ENCODE measurements at regions of chr5 and their contacts with region 1.

Region 1: DNA sequence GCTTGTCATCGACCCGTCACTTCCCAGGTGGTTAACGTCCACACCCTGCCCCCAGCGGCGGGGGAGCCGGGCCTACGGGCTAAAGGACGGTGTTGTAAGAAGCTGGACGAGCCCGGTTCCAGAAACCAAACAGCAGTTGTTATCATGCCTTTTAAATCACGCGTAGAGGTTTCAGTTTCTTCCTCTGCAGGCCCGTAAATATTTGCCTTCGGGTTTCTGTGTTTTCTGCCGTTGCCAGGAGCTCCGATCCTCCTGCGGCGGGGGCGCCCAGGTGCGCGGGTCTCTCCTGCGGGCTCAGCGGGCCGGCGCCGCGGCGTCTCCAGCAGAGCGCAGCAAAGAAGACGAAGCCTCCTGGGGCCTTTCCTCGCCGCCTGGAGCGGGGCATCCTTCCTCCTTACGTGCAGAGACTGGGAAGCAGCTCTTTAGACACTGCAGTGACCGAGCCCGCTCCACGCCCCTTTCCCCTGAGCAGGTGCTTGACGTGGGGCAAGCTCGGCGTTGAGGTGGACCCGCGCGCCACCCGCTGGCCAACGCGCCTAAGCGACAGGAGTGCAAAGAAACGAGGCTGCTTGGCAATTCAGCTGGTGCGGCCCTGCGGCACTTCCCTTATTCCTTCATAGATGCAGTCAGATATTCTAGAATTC is 21.8 kb upstream of the TTC1 start:
- DNase-seq: peak; percentile 34
- ATAC-seq: peak; percentile 99
- H3K4me3 ChIP-seq: peak overlapping the region; percentile 45 to 69 (median 56); a peak in 5 of 6 replicates
- H3K27ac ChIP-seq: no peak overlapping the region
- H3K4me1 ChIP-seq: no peaks in the 10 kb centered on the region
- H3K27me3 ChIP-seq: peaks cover 0 to 48% of the 10 kb centered on the region in 2 experiments; a peak in 4 of 5 replicates
- CTCF ChIP-seq: peak; percentile 96
- EP300 ChIP-seq: no peak
- POLR2A ChIP-seq: no peak
- RAD21 ChIP-seq: peak; percentile 83

Region 2: DNA sequence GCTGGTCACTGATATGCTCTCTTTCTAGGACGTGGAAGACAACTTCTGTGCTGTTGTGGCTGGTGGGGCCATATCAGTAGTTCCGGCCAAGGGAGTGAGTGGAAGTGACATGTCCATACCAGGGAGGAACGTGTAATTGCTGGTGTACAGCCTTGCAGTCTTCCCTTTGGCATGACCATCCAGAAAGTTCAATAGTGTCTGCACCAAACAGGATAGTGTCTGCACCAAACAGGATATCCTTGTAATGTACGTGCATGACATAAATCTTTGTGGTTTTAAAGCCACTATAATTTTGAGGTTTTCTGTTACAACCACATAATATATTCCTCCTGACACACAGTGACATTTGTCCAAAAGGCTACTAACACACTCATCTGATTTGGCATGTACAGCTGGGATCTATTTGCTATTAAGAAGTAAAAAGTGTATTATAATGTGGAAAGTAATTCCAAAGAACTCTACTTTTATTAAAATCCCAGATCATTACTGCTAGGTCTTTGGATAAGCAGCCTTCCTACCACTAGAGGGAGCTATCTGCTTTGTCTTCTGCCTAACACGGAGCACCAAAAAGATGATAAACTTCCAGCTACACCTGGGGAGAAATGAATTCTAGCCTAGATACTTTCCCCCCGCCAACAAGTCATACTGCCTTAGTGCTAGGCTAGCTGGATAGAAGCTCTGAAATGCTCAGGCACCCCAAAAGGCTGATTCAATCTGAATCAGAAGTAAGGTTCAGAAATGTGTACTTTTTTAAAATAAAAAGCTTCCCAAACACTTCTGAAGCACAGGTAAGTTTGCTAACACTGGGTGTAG is 830.5 kb before region 1 on chr5:
- CTCF ChIA-PET with region 1: no interaction called
- POLR2A ChIA-PET with region 1: no interaction called
- in situ Hi-C with region 1: no loop called
- intact Hi-C with region 1: loop called (anchors 5 kb)
- DNase-seq: peak; percentile 64
- ATAC-seq: peak; percentile 91
- H3K4me3 ChIP-seq: no peak overlapping the region
- H3K27ac ChIP-seq: no peak overlapping the region
- H3K4me1 ChIP-seq: no peaks in the 10 kb centered on the region
- H3K27me3 ChIP-seq: no peaks in the 10 kb centered on the region; a peak in 1 of 5 replicates
- CTCF ChIP-seq: peak; percentile 81
- EP300 ChIP-seq: no peak
- POLR2A ChIP-seq: no peak
- RAD21 ChIP-seq: peak; percentile 70

Region 3: DNA sequence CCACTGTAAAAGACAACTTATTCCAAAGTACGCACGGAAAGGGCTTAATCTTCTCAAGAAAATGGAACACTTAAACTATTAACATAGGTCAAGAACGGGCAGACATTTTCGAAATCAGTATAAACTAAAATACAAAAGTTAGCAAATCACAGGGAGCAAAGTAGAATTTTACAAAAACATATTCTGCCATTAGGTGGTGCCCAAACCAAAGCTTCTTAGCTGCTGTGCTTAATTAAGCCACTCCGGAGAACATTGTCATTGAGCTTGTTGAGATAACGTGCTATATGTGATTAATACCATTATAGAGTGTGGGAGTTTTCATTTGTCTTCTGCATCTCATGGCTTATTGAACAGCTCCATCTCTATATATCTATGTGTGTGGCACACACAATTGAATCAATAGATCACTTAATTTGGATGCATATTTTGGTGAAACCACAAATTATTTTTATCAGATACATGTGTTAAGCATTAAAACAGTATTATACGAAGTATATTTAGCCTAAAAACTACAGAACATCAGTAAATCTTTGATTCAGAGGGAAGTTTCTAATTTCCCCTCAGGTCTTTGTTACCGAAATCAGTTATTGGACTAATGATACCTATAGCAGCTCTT is 700.6 kb before region 1 on chr5:
- CTCF ChIA-PET with region 1: no interaction called
- POLR2A ChIA-PET with region 1: no interaction called
- in situ Hi-C with region 1: no loop called
- intact Hi-C with region 1: loop called (anchors 5 kb)
- DNase-seq: peak; percentile 5
- ATAC-seq: peak; percentile 31; the same call in 2 of the 3 replicates
- H3K4me3 ChIP-seq: no peak overlapping the region
- H3K27ac ChIP-seq: no peak overlapping the region
- H3K4me1 ChIP-seq: no peaks in the 10 kb centered on the region
- H3K27me3 ChIP-seq: no peaks in the 10 kb centered on the region
- CTCF ChIP-seq: peak; percentile 46
- EP300 ChIP-seq: no peak
- POLR2A ChIP-seq: no peak
- RAD21 ChIP-seq: no peak

Region 4: DNA sequence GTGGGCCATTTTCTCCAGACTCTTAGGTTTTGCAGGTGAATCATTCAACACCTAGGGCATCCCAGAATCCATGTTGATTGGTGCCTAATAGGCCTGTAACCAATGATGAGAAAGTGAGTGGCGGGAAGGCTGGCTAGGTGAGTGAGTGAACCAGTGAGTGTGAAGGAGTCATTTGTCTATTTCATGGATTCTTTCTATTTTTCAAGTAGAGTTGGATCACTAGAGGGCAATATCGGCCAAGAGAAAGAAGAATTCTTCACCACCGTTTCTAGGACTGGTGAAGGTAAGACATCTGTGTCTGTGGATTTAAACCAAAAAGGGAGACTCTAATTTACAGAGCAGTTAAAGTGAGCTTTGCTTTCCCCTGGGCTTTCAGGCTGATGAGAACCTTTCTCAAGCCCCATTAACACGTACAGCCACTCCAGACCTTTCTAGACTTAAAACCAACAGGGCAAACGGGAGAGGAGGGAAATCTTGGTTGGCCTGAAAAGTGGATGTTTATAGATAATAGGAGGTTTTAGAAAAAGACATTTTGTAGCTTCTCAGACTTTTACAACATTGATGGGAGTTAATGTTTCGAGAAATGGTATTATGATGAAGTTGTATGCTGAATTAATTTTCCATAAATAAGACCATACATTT is 542.6 kb before region 1 on chr5:
- CTCF ChIA-PET with region 1: interaction called, 15 read pairs
- POLR2A ChIA-PET with region 1: no interaction called
- in situ Hi-C with region 1: loop called (anchors 5 kb)
- intact Hi-C with region 1: no loop called
- DNase-seq: peak; percentile 48
- ATAC-seq: peak; percentile 69
- H3K4me3 ChIP-seq: no peak overlapping the region
- H3K27ac ChIP-seq: no peak overlapping the region
- H3K4me1 ChIP-seq: no peaks in the 10 kb centered on the region
- H3K27me3 ChIP-seq: peaks cover 0 to 11% of the 10 kb centered on the region in 2 experiments; a peak in 1 of 5 replicates
- CTCF ChIP-seq: peak; percentile 71
- EP300 ChIP-seq: no peak
- POLR2A ChIP-seq: no peak
- RAD21 ChIP-seq: peak; percentile 40; the same call in 1 of the 2 replicates

Region 5: GRCh38 chr5:159515909-159516415 is 471.2 kb before region 1 on chr5:
- CTCF ChIA-PET with region 1: interaction called, 7 read pairs
- POLR2A ChIA-PET with region 1: no interaction called
- in situ Hi-C with region 1: no loop called
- intact Hi-C with region 1: loop called (anchors 1 kb)
- DNase-seq: peak; percentile 17
- ATAC-seq: peak; percentile 92
- H3K4me3 ChIP-seq: no peak overlapping the region
- H3K27ac ChIP-seq: no peak overlapping the region
- H3K4me1 ChIP-seq: no peaks in the 10 kb centered on the region
- H3K27me3 ChIP-seq: peaks cover 0 to 13% of the 10 kb centered on the region in 2 experiments; a peak in 3 of 5 replicates
- CTCF ChIP-seq: peak; percentile 78
- EP300 ChIP-seq: no peak
- POLR2A ChIP-seq: no peak
- RAD21 ChIP-seq: no peak

Region 6: DNA sequence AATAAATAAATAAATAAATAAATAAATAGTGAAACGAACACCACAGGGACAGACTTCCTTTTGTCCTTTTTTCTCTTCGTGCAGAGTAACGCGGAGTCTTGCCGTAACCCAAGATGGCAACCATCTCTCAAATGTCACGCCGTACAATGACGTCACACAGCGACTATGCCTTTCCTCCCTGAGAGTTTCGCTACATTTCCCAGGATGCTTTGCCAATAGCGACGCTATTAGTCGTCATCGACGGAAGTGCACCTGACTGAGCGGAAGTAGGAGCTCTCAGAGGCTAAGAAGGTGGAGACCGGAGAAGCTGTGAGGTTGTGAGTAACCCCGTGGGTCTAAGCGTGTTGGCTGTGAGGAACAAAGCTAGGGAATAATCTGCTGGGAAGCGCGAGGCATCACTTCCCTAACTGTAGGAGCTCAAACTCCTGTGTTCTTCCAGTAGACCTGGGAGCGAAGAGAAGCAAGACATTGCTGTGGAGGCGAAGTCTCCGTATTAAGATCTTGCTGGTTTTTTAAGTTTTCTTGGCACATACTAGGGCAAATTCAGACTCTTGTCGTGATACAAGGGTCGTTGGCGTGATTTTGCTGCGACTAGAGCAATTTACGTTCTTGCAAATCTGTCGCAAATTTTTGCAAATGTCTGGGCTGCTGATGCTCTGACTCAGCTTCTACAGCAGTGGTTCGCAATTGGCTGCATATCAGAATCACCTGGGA is 21.9 kb after region 1 on chr5 and contains the start of gene TTC1:
- CTCF ChIA-PET with region 1: no interaction called
- POLR2A ChIA-PET with region 1: interaction called, 3 read pairs
- in situ Hi-C with region 1: no loop called
- intact Hi-C with region 1: loop called (anchors 1 kb)
- DNase-seq: peak; percentile 98
- ATAC-seq: peak; percentile 98
- H3K4me3 ChIP-seq: peak within 1 kb of the TSS; percentile 65 to 84 (median 81)
- H3K27ac ChIP-seq: peak within 1 kb of the TSS; percentile 70
- H3K4me1 ChIP-seq: peaks cover 44% of the 10 kb centered on the region
- H3K27me3 ChIP-seq: no peaks in the 10 kb centered on the region; a peak in 1 of 5 replicates
- CTCF ChIP-seq: no peak
- EP300 ChIP-seq: no peak
- POLR2A ChIP-seq: peak; percentile 94
- RAD21 ChIP-seq: no peak
- total RNA-seq, gene TTC1: 72.1 and 104 TPM in 2 replicates

Region 7: DNA sequence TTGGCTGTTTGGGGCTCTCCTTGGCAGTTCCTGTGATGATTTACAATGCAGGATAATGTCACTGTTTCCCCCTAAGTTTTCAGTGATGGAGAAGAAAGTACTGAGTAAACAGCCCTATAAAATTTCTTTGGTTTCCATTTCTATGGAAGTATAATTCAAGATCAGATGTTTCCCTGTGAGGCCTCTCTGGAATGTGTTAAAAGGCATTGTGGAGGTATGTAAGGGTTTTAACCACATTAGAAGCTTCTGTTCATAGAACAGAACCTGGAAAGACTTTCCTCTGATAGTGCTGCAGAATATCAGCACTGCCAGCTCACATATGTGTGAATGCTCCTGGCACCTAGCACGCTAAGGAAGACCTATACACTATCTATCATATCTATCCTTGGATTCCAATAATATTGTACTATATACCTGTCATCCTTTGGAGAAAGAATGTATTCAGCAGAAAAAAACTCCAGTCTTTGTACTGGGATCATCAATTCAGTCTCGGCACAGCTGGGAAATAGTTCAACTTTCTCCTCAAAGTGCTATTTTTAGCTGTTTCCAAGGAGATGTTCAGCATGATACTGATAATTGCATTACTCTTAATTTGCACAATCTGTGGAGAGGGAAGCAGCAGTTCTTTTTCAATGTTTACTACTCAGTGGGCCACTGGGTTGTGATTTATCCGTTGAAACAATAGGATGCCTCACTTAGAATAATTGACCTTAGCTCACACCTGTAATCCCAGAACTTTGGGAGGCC is 43.7 kb after region 1 on chr5:
- CTCF ChIA-PET with region 1: no interaction called
- POLR2A ChIA-PET with region 1: no interaction called
- in situ Hi-C with region 1: no loop called
- intact Hi-C with region 1: no loop called
- DNase-seq: no peak
- ATAC-seq: no peak
- H3K4me3 ChIP-seq: no peak overlapping the region
- H3K27ac ChIP-seq: no peak overlapping the region
- H3K4me1 ChIP-seq: peaks cover 10% of the 10 kb centered on the region; the same call in 1 of the 2 replicates
- H3K27me3 ChIP-seq: no peaks in the 10 kb centered on the region
- CTCF ChIP-seq: no peak
- EP300 ChIP-seq: no peak
- POLR2A ChIP-seq: no peak
- RAD21 ChIP-seq: no peak